H1 (cell line): ENCODE measurements at regions of chr3 and their contacts with region 1.

Region 1: DNA sequence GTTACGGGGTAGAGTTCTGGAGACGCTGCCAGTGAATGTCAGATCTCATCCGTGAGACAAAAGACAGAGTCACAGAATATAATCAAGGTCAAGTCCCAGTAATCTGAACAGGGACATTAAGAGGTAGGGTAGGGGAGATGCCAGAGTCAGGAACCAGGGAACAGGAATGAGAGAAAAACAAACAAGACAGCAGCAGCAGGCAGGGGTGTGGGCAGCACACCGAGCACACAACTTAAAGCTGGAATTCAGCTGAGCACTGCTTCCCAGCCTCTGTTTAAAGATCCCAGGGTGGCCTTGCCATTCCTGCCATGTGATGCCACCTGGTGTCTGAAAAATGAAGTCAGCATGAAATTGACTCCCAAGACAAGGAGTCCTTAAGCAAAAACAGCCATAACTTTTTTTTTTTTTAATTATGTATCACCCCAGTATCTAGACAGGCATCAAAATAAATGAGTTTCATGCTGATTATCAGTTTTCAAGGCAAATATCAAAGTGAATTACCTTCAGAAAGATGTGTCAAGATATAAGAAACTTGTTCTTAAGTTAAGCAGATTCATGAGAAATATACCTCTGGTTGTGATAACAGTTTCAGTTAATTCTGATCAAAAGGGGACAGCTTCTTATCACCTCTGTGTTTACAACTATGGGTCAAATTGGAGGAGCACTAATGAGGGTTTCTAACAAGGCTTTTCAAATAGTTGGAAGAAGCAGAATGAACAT is 203.7 kb downstream of the SLC9A9 start:
- DNase-seq: peak; percentile 43 to 48
- H3K4me3 ChIP-seq: no peak overlapping the region
- H3K27ac ChIP-seq: no peak overlapping the region
- H3K4me1 ChIP-seq: no peaks in the 10 kb centered on the region; a peak in 1 of 7 replicates
- H3K27me3 ChIP-seq: no peaks in the 10 kb centered on the region
- CTCF ChIP-seq: peak; percentile 39 to 75 (median 69)
- EP300 ChIP-seq: no peak
- POLR2A ChIP-seq: no peak
- RAD21 ChIP-seq: peak; percentile 88 to 91

Region 2: GRCh38 chr3:143433787-143434378 is 210.6 kb before region 1 on chr3:
- CTCF ChIA-PET with region 1: interaction called, 63 read pairs
- POLR2A ChIA-PET with region 1: no interaction called
- DNase-seq: peak in 1 of 2 experiments; percentile 58
- H3K4me3 ChIP-seq: no peak overlapping the region
- H3K27ac ChIP-seq: no peak overlapping the region
- H3K4me1 ChIP-seq: peaks cover 3 to 13% (median 10%) of the 10 kb centered on the region in 4 experiments; a peak in 4 of 7 replicates
- H3K27me3 ChIP-seq: no peaks in the 10 kb centered on the region
- CTCF ChIP-seq: peak in 2 of 3 experiments; percentile 53 to 76; a peak in 3 of 4 replicates
- EP300 ChIP-seq: no peak
- POLR2A ChIP-seq: no peak
- RAD21 ChIP-seq: peak; percentile 78 to 79

Region 3: GRCh38 chr3:143661677-143662076 is 17.1 kb after region 1 on chr3:
- CTCF ChIA-PET with region 1: interaction called, 32 read pairs
- POLR2A ChIA-PET with region 1: interaction called, 3 read pairs
- DNase-seq: no peak
- H3K4me3 ChIP-seq: no peak overlapping the region
- H3K27ac ChIP-seq: no peak overlapping the region
- H3K4me1 ChIP-seq: peaks cover 0 to under 1% (median 0%) of the 10 kb centered on the region in 4 experiments; a peak in 2 of 7 replicates
- H3K27me3 ChIP-seq: no peaks in the 10 kb centered on the region
- CTCF ChIP-seq: no peak
- EP300 ChIP-seq: no peak
- POLR2A ChIP-seq: no peak
- RAD21 ChIP-seq: no peak

Region 4: DNA sequence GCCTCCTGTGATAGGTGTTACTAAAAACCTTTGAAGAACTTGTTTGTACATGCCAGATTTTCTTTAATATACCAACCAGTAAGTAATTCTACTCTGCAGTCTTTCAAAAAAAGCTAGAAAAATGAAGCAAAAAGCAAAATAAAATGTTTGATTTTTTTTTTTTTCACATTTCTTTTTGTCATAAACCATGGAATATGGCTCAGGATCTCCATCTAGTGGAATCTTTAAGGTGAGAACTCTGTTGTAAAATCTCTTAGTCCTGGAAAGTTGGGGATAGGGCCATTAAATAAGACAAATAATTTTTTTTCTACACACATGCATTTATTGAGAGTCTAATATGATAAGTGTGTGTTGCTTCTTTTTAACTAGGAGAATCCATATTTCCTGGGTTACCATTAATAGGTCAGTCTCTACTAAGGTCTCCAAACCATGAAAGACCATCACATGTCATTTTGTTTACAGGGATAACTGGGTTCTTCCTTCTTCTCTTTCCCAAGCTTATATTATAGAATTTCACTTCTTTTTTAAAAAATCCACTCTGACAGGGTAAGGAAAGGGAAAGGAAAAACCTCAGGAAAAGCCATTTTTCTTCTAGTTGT is 119.1 kb after region 1 on chr3:
- CTCF ChIA-PET with region 1: interaction called, 20 read pairs
- POLR2A ChIA-PET with region 1: no interaction called
- DNase-seq: no peak
- H3K4me3 ChIP-seq: no peak overlapping the region
- H3K27ac ChIP-seq: no peak overlapping the region
- H3K4me1 ChIP-seq: no peaks in the 10 kb centered on the region
- H3K27me3 ChIP-seq: no peaks in the 10 kb centered on the region
- CTCF ChIP-seq: peak in 2 of 3 experiments; percentile 26 to 39; a peak in 2 of 4 replicates
- EP300 ChIP-seq: no peak
- POLR2A ChIP-seq: no peak
- RAD21 ChIP-seq: peak; percentile 54 to 60